Activated T-helper 1 cell treated with anti-CD3 and anti-CD28 coated beads, Interleukin-12 subunit alpha, Interleukin-12 subunit beta, Interleukin-2, Interleukin-4 antibody, amounts not matched to agents 30 ng/mL and 10 ng/mL and 1 ng/mL, durations not matched to agents 14 hours and 24 hours and 36 hours (primary cell): ENCODE measurements at regions of chr1 and their contacts with region 1.

Region 1: GRCh38 chr1:27111626-27112573 is 43.0 kb downstream of the SLC9A1 start:
- DNase-seq: peak; percentile 61
- H3K4me3 Mint-ChIP-seq: peak overlapping the region; percentile 41
- H3K27ac Mint-ChIP-seq: peak overlapping the region; percentile 77
- H3K4me1 Mint-ChIP-seq: peaks cover 49% of the 10 kb centered on the region
- H3K27me3 Mint-ChIP-seq: no peaks in the 10 kb centered on the region

Region 2: DNA sequence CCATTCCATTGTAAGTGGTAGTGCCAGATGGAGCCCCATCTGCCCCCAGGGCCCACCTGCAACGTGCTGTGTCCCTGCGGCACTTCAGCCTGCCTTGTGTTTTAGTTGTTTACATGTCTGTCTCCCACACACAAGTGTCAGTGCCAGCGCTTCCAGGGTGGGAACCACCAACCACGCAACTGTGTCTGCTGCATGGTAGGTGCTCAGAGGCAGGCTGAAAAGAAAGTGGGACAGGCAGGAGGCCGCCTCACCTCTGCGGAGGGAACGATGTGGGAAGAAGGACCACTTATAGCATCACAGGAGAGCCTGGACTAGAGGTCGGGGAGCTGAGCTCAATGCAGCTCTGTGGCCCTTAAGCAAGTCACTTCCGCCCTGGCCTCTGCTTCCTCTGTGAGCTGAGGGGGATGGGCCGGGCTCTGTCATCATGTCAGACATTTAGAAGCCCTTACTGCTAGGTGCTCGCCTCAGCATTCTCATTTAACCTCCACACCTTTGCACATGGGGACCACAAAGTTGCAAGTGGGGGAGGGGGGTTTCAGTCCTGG is 25.2 kb after region 1 on chr1:
- intact Hi-C with region 1: loop called (anchors 1 kb)
- DNase-seq: peak; percentile 71
- H3K4me3 Mint-ChIP-seq: peak overlapping the region; percentile 84
- H3K27ac Mint-ChIP-seq: peak overlapping the region; percentile 99
- H3K4me1 Mint-ChIP-seq: peaks cover 57% of the 10 kb centered on the region
- H3K27me3 Mint-ChIP-seq: no peaks in the 10 kb centered on the region

Region 3: GRCh38 chr1:28172713-28173150 is 1060.8 kb after region 1 on chr1:
- intact Hi-C with region 1: no loop called
- DNase-seq: peak; percentile 51
- H3K4me3 Mint-ChIP-seq: peak overlapping the region; percentile 40
- H3K27ac Mint-ChIP-seq: peak overlapping the region; percentile 37
- H3K4me1 Mint-ChIP-seq: peaks cover 59% of the 10 kb centered on the region
- H3K27me3 Mint-ChIP-seq: peaks cover 45% of the 10 kb centered on the region